ENCODE measurements at regions of chr14 and their contacts with region 1.

Region 1: GRCh38 chr14:103520657-103521437 is 1.8 kb downstream of the CKB start:
- DNase-seq: peak; percentile 80 to 89 (median 84)
- H3K4me3 ChIP-seq: peak overlapping the region; percentile 32 to 69 (median 42)
- H3K4me3 Mint-ChIP-seq: peak overlapping the region; percentile 73 to 81
- H3K27ac ChIP-seq: no peak overlapping the region
- H3K27ac Mint-ChIP-seq: no peak overlapping the region
- H3K4me1 ChIP-seq: peaks cover 16 to 41% of the 10 kb centered on the region in 2 donors
- H3K4me1 Mint-ChIP-seq: peaks cover 18% of the 10 kb centered on the region
- H3K27me3 ChIP-seq: peaks cover 20 to 41% of the 10 kb centered on the region in 2 donors
- H3K27me3 Mint-ChIP-seq: peaks cover 42 to 54% (median 43%) of the 10 kb centered on the region in 3 donors
- CTCF ChIP-seq: peak; percentile 68

Region 2: GRCh38 chr14:103562429-103563225 is 41.8 kb after region 1 on chr14 and contains the starts of genes BAG5 and COA8:
- intact Hi-C with region 1: loop called in 1 of 2 experiments (anchors 5 kb)
- DNase-seq: peak; percentile 63 to 75 (median 71)
- H3K4me3 ChIP-seq: peak within 1 kb of the TSS; percentile 89 to 98 (median 92)
- H3K4me3 Mint-ChIP-seq: peak within 1 kb of the TSS; percentile 91 to 96
- H3K27ac ChIP-seq: peak within 1 kb of the TSS; percentile 68 to 88
- H3K27ac Mint-ChIP-seq: peak within 1 kb of the TSS; percentile 82 to 91 (median 88)
- H3K4me1 ChIP-seq: peaks cover 24 to 31% of the 10 kb centered on the region in 2 donors
- H3K4me1 Mint-ChIP-seq: peaks cover 36% of the 10 kb centered on the region
- H3K27me3 ChIP-seq: no peaks in the 10 kb centered on the region
- H3K27me3 Mint-ChIP-seq: no peaks in the 10 kb centered on the region
- CTCF ChIP-seq: no peak
- polyA plus RNA-seq, gene BAG5: 4.7 to 33.1 (median 30.1) TPM
- polyA plus RNA-seq, gene COA8: 13.2 to 58.1 (median 52.3) TPM

Measured in CD14-positive monocyte (primary cell).